ENCODE measurements at regions of chr13 and their contacts with region 1.

Region 1: GRCh38 chr13:27533155-27533643 is 82.8 kb upstream of the MTIF3 start:
- DNase-seq: peak; percentile 6
- H3K4me3 Mint-ChIP-seq: no peak overlapping the region
- H3K27ac Mint-ChIP-seq: no peak overlapping the region
- H3K4me1 Mint-ChIP-seq: peaks cover 6% of the 10 kb centered on the region
- H3K27me3 Mint-ChIP-seq: no peaks in the 10 kb centered on the region

Region 2: GRCh38 chr13:27712421-27712820 is 179.2 kb after region 1 on chr13:
- intact Hi-C with region 1: loop called (anchors 1 kb)
- DNase-seq: no peak
- H3K4me3 Mint-ChIP-seq: no peak overlapping the region
- H3K27ac Mint-ChIP-seq: no peak overlapping the region
- H3K4me1 Mint-ChIP-seq: no peaks in the 10 kb centered on the region
- H3K27me3 Mint-ChIP-seq: peaks cover 18% of the 10 kb centered on the region